ENCODE measurements at regions of chr14 and their contacts with region 1.

Region 1: DNA sequence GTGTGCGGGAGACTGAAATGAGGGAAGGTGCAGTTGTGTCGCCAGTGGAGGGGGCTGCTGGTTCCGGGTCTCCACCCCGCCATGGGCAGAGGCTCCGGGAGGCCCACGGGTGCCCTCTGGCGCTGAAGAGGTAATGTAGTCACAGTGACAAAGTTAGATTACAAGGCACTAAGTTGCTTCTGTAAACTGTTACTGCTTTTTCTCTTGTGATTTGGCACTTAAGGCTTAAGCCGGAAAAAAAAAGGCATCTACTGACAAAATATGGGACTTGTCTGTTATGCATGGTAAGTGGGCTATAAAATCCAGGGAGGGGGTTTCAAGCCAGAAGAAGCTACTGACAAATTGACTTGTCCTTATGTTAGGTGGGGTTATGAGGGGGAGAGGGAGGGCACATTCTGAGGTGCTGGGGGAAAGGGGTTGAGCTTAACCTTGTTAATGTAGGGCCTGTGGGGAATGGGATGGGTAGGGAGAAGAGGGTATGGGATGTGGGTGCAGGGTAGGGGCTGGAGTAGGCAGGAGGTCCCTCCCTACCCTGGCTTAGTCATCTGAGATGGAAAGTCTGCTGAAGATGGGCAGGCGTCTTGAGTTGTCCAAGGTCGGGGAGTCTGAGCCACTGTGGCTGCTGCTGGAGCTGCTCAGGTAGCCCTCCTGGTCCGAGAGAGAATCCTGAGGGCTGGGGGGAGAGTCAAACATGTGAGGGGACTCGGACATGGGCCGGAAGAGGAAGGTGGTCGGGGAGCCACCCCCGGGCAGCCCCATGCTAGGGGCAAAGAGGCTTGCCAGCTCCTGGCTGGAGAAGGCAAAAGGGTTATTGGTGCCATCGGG is 3.7 kb downstream of the ZFP36L1 start:
- DNase-seq: peak; percentile 79
- H3K4me3 ChIP-seq: peak overlapping the region; percentile 96
- H3K27ac ChIP-seq: peak overlapping the region; percentile 21
- H3K4me1 ChIP-seq: peaks cover 43% of the 10 kb centered on the region
- H3K27me3 ChIP-seq: no peaks in the 10 kb centered on the region
- CTCF ChIP-seq: peak; percentile 71 to 82
- POLR2A ChIP-seq: peak; percentile 14

Region 2: GRCh38 chr14:67883717-67884116 is 905.5 kb before region 1 on chr14:
- CTCF ChIA-PET with region 1: interaction called, 4 read pairs
- POLR2A ChIA-PET with region 1: interaction called, 10 read pairs
- dilution Hi-C with region 1: no loop called
- intact Hi-C with region 1: no loop called
- DNase-seq: peak; percentile 44
- H3K4me3 ChIP-seq: no peak overlapping the region
- H3K27ac ChIP-seq: no peak overlapping the region
- H3K4me1 ChIP-seq: peaks cover 5% of the 10 kb centered on the region
- H3K27me3 ChIP-seq: no peaks in the 10 kb centered on the region
- CTCF ChIP-seq: no peak
- POLR2A ChIP-seq: no peak

Region 3: DNA sequence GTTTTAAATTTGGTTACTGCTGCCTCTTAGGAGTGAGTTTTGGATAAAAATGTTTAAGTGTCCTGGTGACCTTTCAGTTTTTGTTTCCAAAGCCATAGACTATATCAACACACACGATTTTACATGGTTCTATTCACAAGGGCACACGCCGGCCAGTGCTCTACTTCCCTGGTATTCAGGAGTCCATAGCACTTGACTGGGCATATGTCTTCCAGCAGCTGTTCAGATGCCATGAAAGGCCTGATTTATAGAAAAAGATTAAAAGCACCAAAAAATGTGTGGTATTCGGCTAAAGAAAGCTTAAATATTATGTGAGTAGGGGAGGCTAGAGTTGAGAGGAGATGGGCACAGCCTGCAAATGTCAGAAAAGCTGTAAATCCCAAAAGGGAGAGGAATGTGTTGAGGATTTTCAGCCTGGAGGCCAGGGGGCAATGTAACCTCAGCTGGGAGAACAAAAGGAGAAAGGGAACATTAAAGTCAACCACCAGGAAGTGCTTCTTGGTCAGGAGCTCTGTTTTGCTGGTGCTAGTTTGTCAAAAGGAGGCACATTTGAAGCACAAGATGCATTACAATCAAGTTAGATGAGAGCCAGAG is 491.2 kb before region 1 on chr14:
- CTCF ChIA-PET with region 1: interaction called, 30 read pairs
- POLR2A ChIA-PET with region 1: no interaction called
- dilution Hi-C with region 1: no loop called
- intact Hi-C with region 1: loop called (anchors 1 kb)
- DNase-seq: peak; percentile 58
- H3K4me3 ChIP-seq: no peak overlapping the region
- H3K27ac ChIP-seq: no peak overlapping the region
- H3K4me1 ChIP-seq: peaks cover 10% of the 10 kb centered on the region
- H3K27me3 ChIP-seq: no peaks in the 10 kb centered on the region
- CTCF ChIP-seq: peak; percentile 18 to 43
- POLR2A ChIP-seq: no peak

Region 4: DNA sequence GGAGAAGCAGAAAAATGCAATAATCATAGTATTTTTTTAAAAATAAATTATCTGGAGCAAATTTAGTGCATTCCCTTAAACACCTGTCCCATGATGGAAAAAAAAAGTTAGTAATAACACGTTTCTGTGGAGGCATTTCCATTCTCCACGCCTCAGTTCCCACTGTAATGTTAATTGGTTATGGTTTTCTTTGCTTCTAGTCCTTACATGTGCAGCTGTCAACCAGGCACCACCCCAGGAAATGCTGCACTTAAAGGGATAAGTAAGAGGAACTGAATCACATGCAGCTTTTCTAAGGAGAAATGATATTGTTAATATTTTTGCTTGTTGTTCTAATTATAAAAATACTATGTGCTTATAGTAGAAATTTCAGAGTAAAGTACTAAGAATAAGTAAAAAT is 236.6 kb before region 1 on chr14:
- CTCF ChIA-PET with region 1: interaction called, 3 read pairs
- POLR2A ChIA-PET with region 1: interaction called, 5 read pairs
- dilution Hi-C with region 1: no loop called
- intact Hi-C with region 1: loop called (anchors 2 kb)
- DNase-seq: peak; percentile 72
- H3K4me3 ChIP-seq: no peak overlapping the region
- H3K27ac ChIP-seq: peak overlapping the region; percentile 71
- H3K4me1 ChIP-seq: peaks cover 70% of the 10 kb centered on the region
- H3K27me3 ChIP-seq: no peaks in the 10 kb centered on the region
- CTCF ChIP-seq: no peak
- POLR2A ChIP-seq: peak; percentile 7

Region 5: GRCh38 chr14:68685419-68686204 is 103.6 kb before region 1 on chr14:
- CTCF ChIA-PET with region 1: interaction called, 9 read pairs
- POLR2A ChIA-PET with region 1: interaction called, 34 read pairs
- dilution Hi-C with region 1: no loop called
- intact Hi-C with region 1: loop called (anchors 1 kb)
- DNase-seq: no peak
- H3K4me3 ChIP-seq: no peak overlapping the region
- H3K27ac ChIP-seq: no peak overlapping the region
- H3K4me1 ChIP-seq: peaks cover 43% of the 10 kb centered on the region
- H3K27me3 ChIP-seq: no peaks in the 10 kb centered on the region
- CTCF ChIP-seq: no peak
- POLR2A ChIP-seq: no peak

Region 6: DNA sequence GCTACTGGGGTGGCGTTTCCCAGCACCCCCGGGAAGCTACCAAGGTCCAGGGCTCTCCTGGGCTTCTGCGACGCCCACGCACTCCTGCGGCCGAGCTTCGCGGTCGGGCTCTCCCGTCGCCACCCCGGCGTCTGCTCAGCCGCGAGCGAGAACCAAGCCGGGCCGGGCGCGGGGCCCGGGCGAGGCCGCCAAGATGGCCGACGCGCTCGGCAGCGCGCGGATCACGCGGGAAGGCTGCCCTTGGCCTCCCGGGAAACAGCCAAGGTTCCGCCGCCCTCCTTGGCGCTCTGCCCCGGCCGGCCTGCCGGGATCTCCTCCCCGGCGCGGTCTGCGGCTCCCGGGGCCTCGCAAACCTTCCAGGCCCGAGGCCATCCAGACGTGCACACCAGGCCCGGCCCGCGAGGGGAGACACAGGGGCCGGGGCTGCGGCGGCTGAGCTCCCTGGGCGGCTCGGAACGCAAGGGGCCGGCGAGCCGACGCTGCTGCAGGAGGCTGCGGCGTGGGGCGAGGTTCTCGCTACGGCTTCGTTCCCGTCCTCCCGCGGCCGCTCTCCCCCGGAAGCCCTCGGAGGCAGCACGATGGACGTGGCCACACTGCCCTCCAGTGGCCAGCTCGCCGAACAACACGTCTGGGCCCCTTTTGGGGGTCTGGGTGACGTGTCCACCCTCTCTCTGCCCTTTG is 27.2 kb after region 1 on chr14:
- CTCF ChIA-PET with region 1: interaction called, 41 read pairs
- POLR2A ChIA-PET with region 1: interaction called, 75 read pairs
- dilution Hi-C with region 1: no loop called
- intact Hi-C with region 1: loop called (anchors 1 kb)
- DNase-seq: peak; percentile 89
- H3K4me3 ChIP-seq: peak overlapping the region in 1 of 3 experiments; percentile 24
- H3K27ac ChIP-seq: peak overlapping the region; percentile 71
- H3K4me1 ChIP-seq: peaks cover 21% of the 10 kb centered on the region
- H3K27me3 ChIP-seq: no peaks in the 10 kb centered on the region
- CTCF ChIP-seq: peak; percentile 95
- POLR2A ChIP-seq: peak; percentile 46

Region 7: DNA sequence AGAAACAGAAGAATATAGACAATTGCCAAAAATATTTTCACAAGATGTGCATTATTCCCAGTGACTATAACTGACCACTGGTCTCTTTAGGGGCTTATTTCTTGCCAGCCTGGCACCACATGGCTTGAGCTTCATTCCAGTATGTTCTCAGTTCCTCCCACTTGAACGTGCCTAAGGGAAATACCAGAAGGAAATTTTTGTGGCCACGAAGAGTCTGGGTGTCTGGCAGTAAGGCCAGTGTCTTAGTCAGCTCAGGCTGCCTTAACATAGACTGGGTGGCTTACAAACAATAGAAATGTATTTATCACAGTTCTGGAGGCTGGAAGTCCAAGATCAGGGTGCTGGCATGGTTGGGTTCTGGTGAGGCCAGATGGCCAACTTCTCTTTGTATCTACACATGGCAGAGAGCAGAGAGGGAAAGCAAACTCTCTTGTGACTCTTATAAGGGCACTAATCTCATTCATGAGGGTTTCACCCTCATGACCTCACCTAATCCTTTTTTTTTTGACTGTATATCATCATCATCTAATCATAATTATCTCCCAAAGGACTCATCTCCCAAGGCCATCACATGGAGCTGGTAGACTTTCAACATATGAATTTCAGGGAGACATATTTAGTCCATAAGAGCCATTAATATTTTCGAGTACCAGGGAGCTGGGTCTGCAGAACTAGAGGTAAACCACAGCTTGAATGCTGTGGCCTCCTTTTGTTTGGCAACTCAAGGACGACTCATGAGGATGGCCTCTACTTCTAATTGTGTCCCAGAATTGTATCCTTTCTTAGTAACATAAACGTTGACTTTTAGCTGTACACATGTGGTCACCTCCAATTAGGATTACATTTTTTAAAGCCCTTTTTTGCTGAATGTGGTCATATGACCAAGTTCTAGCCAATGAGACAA is 1084.9 kb after region 1 on chr14:
- CTCF ChIA-PET with region 1: no interaction called
- POLR2A ChIA-PET with region 1: no interaction called
- dilution Hi-C with region 1: no loop called
- intact Hi-C with region 1: no loop called
- DNase-seq: no peak
- H3K4me3 ChIP-seq: no peak overlapping the region
- H3K27ac ChIP-seq: no peak overlapping the region
- H3K4me1 ChIP-seq: no peaks in the 10 kb centered on the region
- H3K27me3 ChIP-seq: peaks cover 8 to 10% of the 10 kb centered on the region in 2 experiments
- CTCF ChIP-seq: no peak
- POLR2A ChIP-seq: no peak